ENCODE measurements at regions of chr2 and their contacts with region 1.

Region 1: DNA sequence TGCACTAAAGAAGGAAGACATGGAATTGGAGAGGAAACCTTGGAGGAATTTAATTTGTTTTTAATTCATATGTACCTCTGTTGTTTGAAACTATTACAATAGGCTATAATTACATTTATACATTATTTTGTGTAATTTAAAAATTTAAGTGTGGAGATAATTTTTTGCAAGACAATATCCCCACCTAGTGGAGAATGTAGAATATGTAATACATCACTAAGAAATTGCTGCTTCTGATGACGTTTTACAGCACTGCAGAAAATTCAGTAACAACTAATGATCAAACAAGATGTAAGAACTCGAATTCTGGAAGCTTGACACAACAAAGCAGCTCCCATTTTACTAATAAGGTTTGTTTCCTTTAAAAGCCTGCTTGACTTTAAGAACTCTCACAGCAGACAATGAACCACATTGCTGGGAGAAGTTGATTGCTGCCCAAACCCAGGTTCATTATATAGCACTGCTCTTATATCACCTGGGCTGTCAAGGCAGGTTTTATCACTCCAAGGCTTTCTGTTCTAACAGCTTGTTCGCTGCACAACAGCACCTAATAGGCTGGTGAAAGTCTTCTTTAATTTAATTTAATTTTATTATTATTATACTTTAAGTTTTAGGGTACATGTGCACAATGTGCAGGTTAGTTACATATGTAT is 53.4 kb downstream of the THADA start:
- DNase-seq: peak; percentile 67
- ATAC-seq: peak; percentile 49
- H3K4me3 ChIP-seq: no peak overlapping the region
- H3K4me3 Mint-ChIP-seq: no peak overlapping the region
- H3K27ac ChIP-seq: no peak overlapping the region
- H3K27ac Mint-ChIP-seq: no peak overlapping the region
- H3K4me1 ChIP-seq: peaks cover 12% of the 10 kb centered on the region in 2 donors
- H3K4me1 Mint-ChIP-seq: peaks cover 13% of the 10 kb centered on the region
- H3K27me3 ChIP-seq: no peaks in the 10 kb centered on the region
- H3K27me3 Mint-ChIP-seq: no peaks in the 10 kb centered on the region
- CTCF ChIP-seq: peak; percentile 84

Region 2: DNA sequence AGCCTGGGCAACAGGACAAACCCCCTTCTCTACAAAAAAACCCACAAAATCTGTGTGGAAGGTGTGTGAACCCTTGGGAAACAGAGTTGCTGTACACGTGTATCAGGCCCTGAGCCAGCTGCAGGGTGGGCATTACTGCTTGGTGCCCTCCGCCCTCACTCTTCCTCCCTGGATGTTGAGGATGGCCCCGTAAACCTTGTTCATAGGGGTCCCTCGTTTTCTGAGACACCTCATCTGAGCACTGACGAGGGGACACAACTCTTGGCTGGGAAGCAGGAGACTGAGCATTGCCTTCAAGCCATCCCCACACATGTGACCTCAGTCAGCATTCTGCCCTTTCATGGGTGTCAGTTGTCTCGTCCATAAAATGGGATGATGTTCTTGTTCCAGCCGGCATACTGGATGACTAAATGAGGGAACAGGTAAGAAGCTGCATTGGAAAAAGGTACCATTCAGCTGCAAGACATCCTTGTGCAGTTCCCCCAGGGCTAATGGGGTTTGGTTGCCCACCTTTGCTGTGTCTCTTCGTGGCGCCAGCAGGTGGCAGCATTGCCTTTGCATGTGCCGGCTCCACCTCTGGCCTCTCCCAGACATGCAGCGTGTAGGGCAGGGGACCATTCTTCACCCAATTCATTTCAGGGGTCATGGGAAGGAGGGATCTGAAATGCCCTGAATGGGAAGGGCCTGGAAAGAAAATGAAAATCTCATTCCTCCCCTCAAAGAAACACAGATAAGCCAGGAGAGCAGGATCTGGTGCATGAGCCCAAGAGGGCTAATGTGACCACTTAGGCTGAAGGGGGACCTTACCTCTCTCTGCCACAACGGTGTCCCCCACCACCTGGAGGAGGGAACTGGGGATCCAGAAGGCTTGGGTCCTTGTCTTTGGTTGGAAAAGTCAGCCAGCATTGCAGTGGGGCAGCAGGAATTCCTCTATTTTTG is 713.7 kb before region 1 on chr2:
- CTCF ChIA-PET with region 1: interaction called, 18 read pairs
- POLR2A ChIA-PET with region 1: interaction called, 4 read pairs
- intact Hi-C with region 1: loop called (anchors 1 kb)
- DNase-seq: peak; percentile 82
- ATAC-seq: peak; percentile 95
- H3K4me3 ChIP-seq: no peak overlapping the region
- H3K4me3 Mint-ChIP-seq: peak overlapping the region; percentile 39
- H3K27ac ChIP-seq: no peak overlapping the region
- H3K27ac Mint-ChIP-seq: peak overlapping the region; percentile 26
- H3K4me1 ChIP-seq: peaks cover 8 to 13% of the 10 kb centered on the region in 2 donors
- H3K4me1 Mint-ChIP-seq: peaks cover 16% of the 10 kb centered on the region
- H3K27me3 ChIP-seq: no peaks in the 10 kb centered on the region
- H3K27me3 Mint-ChIP-seq: peaks cover 3% of the 10 kb centered on the region
- CTCF ChIP-seq: peak; percentile 92

Region 3: DNA sequence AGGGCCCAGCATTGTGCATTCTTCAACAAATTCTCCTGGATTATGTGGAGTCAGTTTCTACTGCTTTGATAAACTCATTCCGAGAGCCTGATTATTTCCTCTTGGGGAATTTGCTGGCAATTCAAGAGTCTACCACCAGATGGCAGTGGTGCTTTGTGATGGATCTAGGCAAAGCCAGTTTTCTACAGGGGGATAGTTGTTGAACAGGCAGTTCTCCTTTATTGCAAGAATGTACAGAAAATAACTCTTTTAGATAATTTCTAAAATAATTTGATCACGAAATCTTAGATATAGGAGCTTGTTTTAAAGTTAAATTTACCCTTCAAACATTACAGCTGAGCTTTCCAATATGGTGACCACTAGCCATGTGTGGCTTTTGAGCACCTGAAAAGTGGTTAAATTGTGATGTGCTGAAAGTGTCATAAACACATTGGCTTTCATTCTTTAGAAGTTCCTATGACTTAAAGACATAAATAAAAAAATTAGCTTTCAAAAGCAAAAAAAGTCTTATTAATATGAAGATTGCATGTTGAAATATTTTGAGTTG is 683.3 kb before region 1 on chr2:
- CTCF ChIA-PET with region 1: interaction called, 50 read pairs
- POLR2A ChIA-PET with region 1: no interaction called
- intact Hi-C with region 1: loop called (anchors 1 kb)
- DNase-seq: peak; percentile 72
- ATAC-seq: peak; percentile 53
- H3K4me3 ChIP-seq: no peak overlapping the region
- H3K4me3 Mint-ChIP-seq: no peak overlapping the region
- H3K27ac ChIP-seq: no peak overlapping the region
- H3K27ac Mint-ChIP-seq: no peak overlapping the region
- H3K4me1 ChIP-seq: no peaks in the 10 kb centered on the region
- H3K4me1 Mint-ChIP-seq: no peaks in the 10 kb centered on the region
- H3K27me3 ChIP-seq: no peaks in the 10 kb centered on the region
- H3K27me3 Mint-ChIP-seq: peaks cover 3% of the 10 kb centered on the region
- CTCF ChIP-seq: peak; percentile 92

Region 4: GRCh38 chr2:42974721-42975717 is 567.4 kb before region 1 on chr2:
- CTCF ChIA-PET with region 1: interaction called, 12 read pairs
- POLR2A ChIA-PET with region 1: no interaction called
- intact Hi-C with region 1: no loop called
- DNase-seq: peak; percentile 69
- ATAC-seq: peak; percentile 78
- H3K4me3 ChIP-seq: no peak overlapping the region
- H3K4me3 Mint-ChIP-seq: peak overlapping the region; percentile 26
- H3K27ac ChIP-seq: no peak overlapping the region
- H3K27ac Mint-ChIP-seq: no peak overlapping the region
- H3K4me1 ChIP-seq: peaks cover 30 to 31% of the 10 kb centered on the region in 2 donors
- H3K4me1 Mint-ChIP-seq: peaks cover 35% of the 10 kb centered on the region
- H3K27me3 ChIP-seq: peaks cover 0 to 3% (median 0%) of the 10 kb centered on the region in 4 experiments
- H3K27me3 Mint-ChIP-seq: no peaks in the 10 kb centered on the region
- CTCF ChIP-seq: peak; percentile 75

Region 5: DNA sequence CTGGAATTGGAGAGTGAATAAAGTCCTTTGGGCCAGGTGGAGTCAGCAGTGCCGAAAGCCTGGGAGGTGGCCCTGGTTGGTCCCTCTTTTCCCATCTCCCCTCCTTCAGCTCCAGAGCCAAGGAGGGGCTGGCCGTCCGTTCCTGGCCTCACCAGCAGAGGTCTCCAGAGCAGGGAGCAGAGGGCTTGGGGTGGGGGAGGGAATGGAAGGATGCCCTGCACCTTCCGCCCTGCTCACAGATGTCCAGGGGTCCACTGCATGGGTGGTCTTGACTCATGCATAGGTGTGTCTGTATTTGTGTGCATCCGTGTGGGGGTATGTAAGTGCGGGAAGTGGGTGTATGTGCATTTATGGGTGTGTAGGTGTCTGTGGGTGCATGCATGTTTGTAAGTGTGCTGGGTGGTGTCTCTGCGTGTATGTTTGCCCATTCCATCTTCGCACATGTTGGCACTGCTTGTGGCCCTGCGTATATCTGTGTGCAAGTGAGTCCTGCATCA is 517.8 kb before region 1 on chr2:
- CTCF ChIA-PET with region 1: no interaction called
- POLR2A ChIA-PET with region 1: no interaction called
- intact Hi-C with region 1: loop called (anchors 2 kb)
- DNase-seq: peak; percentile 60
- ATAC-seq: peak; percentile 75
- H3K4me3 ChIP-seq: no peak overlapping the region
- H3K4me3 Mint-ChIP-seq: no peak overlapping the region
- H3K27ac ChIP-seq: no peak overlapping the region
- H3K27ac Mint-ChIP-seq: no peak overlapping the region
- H3K4me1 ChIP-seq: peaks cover 7 to 8% of the 10 kb centered on the region in 2 donors
- H3K4me1 Mint-ChIP-seq: peaks cover 10% of the 10 kb centered on the region
- H3K27me3 ChIP-seq: no peaks in the 10 kb centered on the region
- H3K27me3 Mint-ChIP-seq: no peaks in the 10 kb centered on the region
- CTCF ChIP-seq: peak; percentile 55

Region 6: GRCh38 chr2:43270930-43271615 is 271.3 kb before region 1 on chr2:
- CTCF ChIA-PET with region 1: no interaction called
- POLR2A ChIA-PET with region 1: interaction called, 13 read pairs
- intact Hi-C with region 1: no loop called
- DNase-seq: no peak
- ATAC-seq: no peak
- H3K4me3 ChIP-seq: no peak overlapping the region
- H3K4me3 Mint-ChIP-seq: no peak overlapping the region
- H3K27ac ChIP-seq: no peak overlapping the region
- H3K27ac Mint-ChIP-seq: no peak overlapping the region
- H3K4me1 ChIP-seq: no peaks in the 10 kb centered on the region
- H3K4me1 Mint-ChIP-seq: no peaks in the 10 kb centered on the region
- H3K27me3 ChIP-seq: no peaks in the 10 kb centered on the region
- H3K27me3 Mint-ChIP-seq: no peaks in the 10 kb centered on the region
- CTCF ChIP-seq: no peak

Region 7: GRCh38 chr2:43637030-43637803 is 94.8 kb after region 1 on chr2 and contains the start of gene PLEKHH2:
- CTCF ChIA-PET with region 1: no interaction called
- POLR2A ChIA-PET with region 1: no interaction called
- intact Hi-C with region 1: no loop called
- DNase-seq: peak; percentile 84
- ATAC-seq: peak; percentile 100
- H3K4me3 ChIP-seq: peak within 1 kb of the TSS; percentile 34 to 64 (median 61)
- H3K4me3 Mint-ChIP-seq: peak within 1 kb of the TSS; percentile 85
- H3K27ac ChIP-seq: no peak within 1 kb of the TSS
- H3K27ac Mint-ChIP-seq: no peak within 1 kb of the TSS
- H3K4me1 ChIP-seq: peaks cover 15 to 16% of the 10 kb centered on the region in 2 donors
- H3K4me1 Mint-ChIP-seq: peaks cover 15% of the 10 kb centered on the region
- H3K27me3 ChIP-seq: peaks cover 0 to 36% (median 23%) of the 10 kb centered on the region in 4 experiments
- H3K27me3 Mint-ChIP-seq: peaks cover 56% of the 10 kb centered on the region
- CTCF ChIP-seq: no peak
- total RNA-seq, gene PLEKHH2: 0.17 and 0.58 TPM in 2 replicates

Measured in B cell (primary cell).